Naive thymus-derived CD4-positive, alpha-beta T cell (primary cell): ENCODE measurements at regions of chr6 and their contacts with region 1.

Region 1: DNA sequence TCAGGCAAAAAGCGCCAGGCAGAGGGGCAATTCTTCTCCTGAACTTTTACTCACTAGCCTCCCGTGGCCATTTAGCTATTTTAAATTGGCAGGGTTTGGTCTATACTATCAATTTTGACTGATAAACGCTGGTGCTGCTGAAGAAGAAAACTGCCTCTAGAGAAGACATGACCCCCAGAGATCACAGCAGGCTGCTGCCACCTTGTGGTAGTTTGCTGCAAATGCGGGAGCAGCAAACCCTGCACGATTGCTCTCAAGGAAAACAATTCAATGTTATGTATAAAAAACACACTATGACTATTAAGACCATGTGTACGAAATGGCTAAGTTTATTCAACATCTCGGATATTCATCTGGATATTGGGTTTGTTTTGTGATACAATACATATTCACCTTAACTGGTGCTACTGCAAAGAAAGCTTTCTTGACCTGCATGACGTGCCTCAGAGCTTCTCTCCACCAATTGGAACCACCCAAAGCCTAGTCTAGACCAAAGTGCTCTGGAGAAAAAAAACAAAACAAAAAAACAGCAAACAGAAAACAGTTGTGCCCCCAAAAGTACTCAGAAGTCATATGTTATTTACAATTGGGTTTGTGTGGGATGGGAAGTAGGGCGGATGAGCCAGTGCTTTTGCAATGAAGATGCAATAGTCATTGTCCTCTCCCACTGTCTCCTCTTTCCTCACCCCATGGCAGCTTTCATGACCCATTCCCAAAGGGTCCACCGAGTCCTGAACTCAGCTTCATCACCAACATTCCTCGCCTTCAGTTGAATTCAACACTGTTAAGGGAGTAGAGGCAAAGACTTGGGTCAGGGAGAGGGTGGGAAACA is 19.6 kb upstream of the IL17F start:
- DNase-seq: peak; percentile 42 to 73 (median 64)
- ATAC-seq: peak; percentile 91
- H3K4me3 ChIP-seq: no peak overlapping the region
- H3K4me3 Mint-ChIP-seq: peak overlapping the region in 4 of 10 donors; percentile 25 to 44 (median 40)
- H3K27ac ChIP-seq: no peak overlapping the region
- H3K27ac Mint-ChIP-seq: peak overlapping the region in 7 of 9 donors; percentile 1 to 90 (median 18)
- H3K4me1 ChIP-seq: peaks cover 0 to 3% of the 10 kb centered on the region in 2 donors
- H3K4me1 Mint-ChIP-seq: peaks cover 3 to 19% (median 15%) of the 10 kb centered on the region in 7 donors
- H3K27me3 ChIP-seq: no peaks in the 10 kb centered on the region
- H3K27me3 Mint-ChIP-seq: no peaks in the 10 kb centered on the region

Region 2: GRCh38 chr6:51855310-51856082 is 408.4 kb before region 1 on chr6:
- CTCF ChIA-PET with region 1: no interaction called
- POLR2A ChIA-PET with region 1: no interaction called
- intact Hi-C with region 1: loop called in 1 of 2 experiments (anchors 10 kb)
- DNase-seq: peak in 5 of 9 donors; percentile 8 to 31 (median 15)
- ATAC-seq: no peak
- H3K4me3 ChIP-seq: no peak overlapping the region
- H3K4me3 Mint-ChIP-seq: no peak overlapping the region
- H3K27ac ChIP-seq: no peak overlapping the region
- H3K27ac Mint-ChIP-seq: no peak overlapping the region
- H3K4me1 ChIP-seq: no peaks in the 10 kb centered on the region
- H3K4me1 Mint-ChIP-seq: peaks cover 0 to 2% (median 0%) of the 10 kb centered on the region in 7 donors
- H3K27me3 ChIP-seq: peaks cover 0 to 3% of the 10 kb centered on the region in 2 donors
- H3K27me3 Mint-ChIP-seq: peaks cover 3 to 39% (median 23%) of the 10 kb centered on the region in 5 donors

Region 3: DNA sequence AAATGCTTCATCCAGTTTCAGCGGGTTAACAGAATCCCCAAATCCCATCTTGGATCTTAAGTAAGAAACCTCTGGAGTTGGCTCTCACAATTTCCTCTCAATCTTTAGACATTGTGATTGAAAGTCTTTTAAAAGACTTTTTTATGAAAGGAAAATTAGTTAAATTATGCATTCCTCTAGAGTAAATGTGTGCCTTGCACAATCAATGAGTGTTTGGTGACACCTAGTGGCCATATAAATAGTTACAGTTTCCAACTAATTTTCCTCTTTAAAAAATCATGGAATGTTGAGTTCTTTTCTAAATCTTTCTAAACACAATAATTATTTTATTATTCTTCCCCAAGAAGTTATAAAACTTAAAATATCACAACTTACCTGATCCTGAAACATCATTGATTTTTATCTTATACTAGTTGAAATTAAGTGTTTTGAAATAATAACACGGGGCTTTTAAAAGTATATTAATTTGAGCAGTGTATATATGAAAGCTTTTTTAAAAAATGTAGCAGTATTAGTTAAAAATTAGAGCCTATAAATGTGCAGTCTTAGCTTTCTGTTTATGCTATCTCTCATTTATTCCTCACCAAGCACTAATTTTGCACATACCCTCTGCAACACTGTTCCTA is 242.9 kb before region 1 on chr6:
- CTCF ChIA-PET with region 1: no interaction called
- POLR2A ChIA-PET with region 1: no interaction called
- intact Hi-C with region 1: no loop called
- DNase-seq: peak in 2 of 9 donors; percentile 6 to 15
- ATAC-seq: no peak
- H3K4me3 ChIP-seq: no peak overlapping the region
- H3K4me3 Mint-ChIP-seq: no peak overlapping the region
- H3K27ac ChIP-seq: no peak overlapping the region
- H3K27ac Mint-ChIP-seq: no peak overlapping the region
- H3K4me1 ChIP-seq: no peaks in the 10 kb centered on the region
- H3K4me1 Mint-ChIP-seq: no peaks in the 10 kb centered on the region
- H3K27me3 ChIP-seq: no peaks in the 10 kb centered on the region
- H3K27me3 Mint-ChIP-seq: peaks cover 2 to 16% (median 3%) of the 10 kb centered on the region in 5 donors

Region 4: GRCh38 chr6:52063584-52064344 is 200.2 kb before region 1 on chr6:
- CTCF ChIA-PET with region 1: interaction called, 9 read pairs
- POLR2A ChIA-PET with region 1: no interaction called
- intact Hi-C with region 1: loop called in 1 of 2 experiments (anchors 1 kb)
- DNase-seq: peak in 8 of 9 donors; percentile 33 to 70 (median 64)
- ATAC-seq: peak; percentile 93
- H3K4me3 ChIP-seq: peak overlapping the region; percentile 48
- H3K4me3 Mint-ChIP-seq: peak overlapping the region; percentile 44 to 91 (median 81)
- H3K27ac ChIP-seq: peak overlapping the region; percentile 40
- H3K27ac Mint-ChIP-seq: peak overlapping the region; percentile 39 to 90 (median 81)
- H3K4me1 ChIP-seq: peaks cover 12 to 13% of the 10 kb centered on the region in 2 donors
- H3K4me1 Mint-ChIP-seq: peaks cover 4 to 18% (median 13%) of the 10 kb centered on the region in 7 donors
- H3K27me3 ChIP-seq: no peaks in the 10 kb centered on the region
- H3K27me3 Mint-ChIP-seq: peaks cover 0 to 23% (median 1%) of the 10 kb centered on the region in 5 donors

Region 5: DNA sequence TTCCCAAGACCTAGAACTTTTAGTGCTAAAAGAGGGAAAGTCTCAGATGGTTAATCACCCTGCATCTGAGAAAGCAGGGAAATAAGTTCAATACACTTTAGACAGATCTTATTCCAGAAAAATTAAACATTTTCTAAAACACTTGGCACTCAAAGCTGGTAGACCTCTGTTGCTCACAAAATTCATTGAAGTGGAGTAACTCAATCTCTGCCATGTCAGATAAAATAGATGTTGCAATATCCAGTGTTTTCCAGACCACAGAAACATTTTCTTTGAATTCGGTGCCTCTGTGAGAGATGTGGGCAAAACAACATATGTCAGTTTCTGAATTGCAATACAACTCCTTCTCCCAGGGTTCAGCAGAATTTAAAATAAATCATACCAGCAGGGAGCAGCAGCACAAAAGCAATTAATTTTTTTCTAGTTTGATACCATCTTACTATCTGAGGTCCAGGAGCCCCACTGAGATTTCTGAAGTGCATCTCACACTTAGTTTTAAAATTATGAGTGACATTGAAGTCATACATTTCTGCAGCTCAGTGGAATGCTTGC is 165.2 kb before region 1 on chr6:
- CTCF ChIA-PET with region 1: no interaction called
- POLR2A ChIA-PET with region 1: no interaction called
- intact Hi-C with region 1: loop called in 1 of 2 experiments (anchors 2 kb)
- DNase-seq: peak in 1 of 9 donors; percentile 7
- ATAC-seq: no peak
- H3K4me3 ChIP-seq: no peak overlapping the region
- H3K4me3 Mint-ChIP-seq: no peak overlapping the region
- H3K27ac ChIP-seq: no peak overlapping the region
- H3K27ac Mint-ChIP-seq: no peak overlapping the region
- H3K4me1 ChIP-seq: no peaks in the 10 kb centered on the region
- H3K4me1 Mint-ChIP-seq: no peaks in the 10 kb centered on the region
- H3K27me3 ChIP-seq: no peaks in the 10 kb centered on the region
- H3K27me3 Mint-ChIP-seq: peaks cover 11 to 38% (median 30%) of the 10 kb centered on the region in 5 donors

Region 6: GRCh38 chr6:52162940-52163908 is 100.7 kb before region 1 on chr6:
- CTCF ChIA-PET with region 1: interaction called, 31 read pairs
- POLR2A ChIA-PET with region 1: no interaction called
- intact Hi-C with region 1: loop called (anchors 1 kb)
- DNase-seq: peak in 7 of 9 donors; percentile 5 to 49 (median 37)
- ATAC-seq: peak; percentile 62
- H3K4me3 ChIP-seq: no peak overlapping the region
- H3K4me3 Mint-ChIP-seq: no peak overlapping the region
- H3K27ac ChIP-seq: no peak overlapping the region
- H3K27ac Mint-ChIP-seq: peak overlapping the region in 1 of 9 donors; percentile 19
- H3K4me1 ChIP-seq: no peaks in the 10 kb centered on the region
- H3K4me1 Mint-ChIP-seq: peaks cover 0 to 9% (median 0%) of the 10 kb centered on the region in 7 donors
- H3K27me3 ChIP-seq: no peaks in the 10 kb centered on the region
- H3K27me3 Mint-ChIP-seq: peaks cover 6 to 26% (median 17%) of the 10 kb centered on the region in 5 donors

Region 7: DNA sequence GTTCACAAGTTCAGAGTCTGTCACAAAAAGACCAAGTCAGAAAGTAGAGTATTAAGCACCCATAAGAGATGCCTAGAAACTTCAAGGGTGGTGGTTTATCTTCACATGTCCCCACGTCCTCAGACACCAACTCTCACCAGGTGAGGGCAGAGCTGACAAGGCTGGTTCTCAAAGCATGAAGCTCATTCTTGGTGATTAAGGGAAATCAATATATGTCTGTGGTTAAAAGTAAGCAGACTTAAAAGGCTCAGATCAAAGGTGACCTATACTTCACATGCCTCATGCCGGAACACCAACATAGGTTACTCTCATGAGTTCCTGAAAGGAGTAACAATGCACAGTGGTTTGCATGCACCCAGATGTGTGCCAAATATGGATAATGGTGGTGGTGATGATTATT is 50.8 kb before region 1 on chr6:
- CTCF ChIA-PET with region 1: interaction called, 6 read pairs
- POLR2A ChIA-PET with region 1: no interaction called
- intact Hi-C with region 1: loop called in 1 of 2 experiments (anchors 1 kb)
- DNase-seq: peak in 5 of 9 donors; percentile 2 to 17 (median 9)
- ATAC-seq: no peak
- H3K4me3 ChIP-seq: no peak overlapping the region
- H3K4me3 Mint-ChIP-seq: no peak overlapping the region
- H3K27ac ChIP-seq: no peak overlapping the region
- H3K27ac Mint-ChIP-seq: no peak overlapping the region
- H3K4me1 ChIP-seq: no peaks in the 10 kb centered on the region
- H3K4me1 Mint-ChIP-seq: peaks cover 1 to 11% (median 11%) of the 10 kb centered on the region in 7 donors
- H3K27me3 ChIP-seq: no peaks in the 10 kb centered on the region
- H3K27me3 Mint-ChIP-seq: peaks cover 0 to 35% (median 10%) of the 10 kb centered on the region in 5 donors